Heart left ventricle (tissue), 16 donors: ENCODE measurements at regions of chr5 and their contacts with region 1.

Region 1: GRCh38 chr5:178859625-178860531 is at the start of gene ZNF354B:
- DNase-seq: peak; percentile 89 to 94 (median 93)
- ATAC-seq: peak; percentile 95 to 99 (median 98)
- H3K4me3 ChIP-seq: peak within 1 kb of the TSS; percentile 68 to 96 (median 86)
- H3K27ac ChIP-seq: peak within 1 kb of the TSS; percentile 45 to 93 (median 85)
- H3K4me1 ChIP-seq: peaks cover 0 to 25% (median 12%) of the 10 kb centered on the region in 12 donors
- H3K27me3 ChIP-seq: no peaks in the 10 kb centered on the region
- CTCF ChIP-seq: peak in 6 of 12 donors; percentile 13 to 38 (median 34)
- POLR2A ChIP-seq: peak; percentile 42 to 72
- total RNA-seq, gene ZNF354B: 5.2 to 11.9 (median 7.6) TPM

Region 2: DNA sequence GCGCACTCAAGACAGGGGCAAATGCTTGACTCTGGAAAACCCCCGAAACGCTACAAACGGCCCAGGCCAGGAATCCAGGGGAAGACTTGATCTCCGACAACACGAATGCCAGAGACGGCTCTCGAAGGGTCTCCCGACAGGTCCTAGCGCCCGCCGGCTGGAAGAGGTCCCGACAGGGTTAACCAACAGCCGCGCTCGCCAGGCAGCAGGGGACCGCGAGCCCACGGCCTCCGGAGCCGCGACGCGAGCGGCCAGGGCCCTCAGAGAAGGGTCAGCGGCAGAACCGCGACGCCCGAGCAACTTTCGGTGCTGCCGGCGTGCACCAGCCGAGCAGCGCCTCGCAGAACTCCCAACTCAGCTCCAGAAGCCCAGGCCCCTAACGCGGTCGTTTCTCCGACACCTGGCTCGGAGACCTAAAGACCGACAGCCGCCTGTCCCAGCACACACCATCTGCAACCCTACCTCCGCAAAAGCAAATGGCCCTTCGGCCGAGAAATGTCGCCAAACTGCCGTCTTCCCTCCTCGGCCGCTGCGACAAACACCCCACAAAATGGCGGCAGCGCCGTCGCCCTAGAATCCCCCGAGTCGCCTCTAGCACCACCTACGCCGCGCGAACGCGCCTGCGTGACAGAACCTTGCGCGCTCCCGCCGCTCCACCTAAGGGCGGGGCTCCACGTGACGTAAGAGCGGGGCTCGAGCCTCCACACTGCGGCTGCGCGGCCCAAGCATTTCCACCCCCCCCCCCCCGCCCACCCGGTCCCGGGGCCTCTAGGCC is 233.2 kb before region 1 on chr5 and contains the start of gene CLK4:
- intact Hi-C with region 1: loop called in 2 of 10 experiments (anchors 10 kb)
- DNase-seq: peak; percentile 96 to 99 (median 97)
- ATAC-seq: peak; percentile 95 to 98 (median 97)
- H3K4me3 ChIP-seq: peak within 1 kb of the TSS; percentile 58 to 98 (median 84)
- H3K27ac ChIP-seq: peak within 1 kb of the TSS; percentile 87 to 99 (median 98)
- H3K4me1 ChIP-seq: peaks cover 12 to 41% (median 33%) of the 10 kb centered on the region in 12 donors
- H3K27me3 ChIP-seq: no peaks in the 10 kb centered on the region
- CTCF ChIP-seq: no peak
- POLR2A ChIP-seq: peak in 1 of 2 donors; percentile 79
- total RNA-seq, gene CLK4: 9.9 to 24.0 (median 16.3) TPM

Region 3: DNA sequence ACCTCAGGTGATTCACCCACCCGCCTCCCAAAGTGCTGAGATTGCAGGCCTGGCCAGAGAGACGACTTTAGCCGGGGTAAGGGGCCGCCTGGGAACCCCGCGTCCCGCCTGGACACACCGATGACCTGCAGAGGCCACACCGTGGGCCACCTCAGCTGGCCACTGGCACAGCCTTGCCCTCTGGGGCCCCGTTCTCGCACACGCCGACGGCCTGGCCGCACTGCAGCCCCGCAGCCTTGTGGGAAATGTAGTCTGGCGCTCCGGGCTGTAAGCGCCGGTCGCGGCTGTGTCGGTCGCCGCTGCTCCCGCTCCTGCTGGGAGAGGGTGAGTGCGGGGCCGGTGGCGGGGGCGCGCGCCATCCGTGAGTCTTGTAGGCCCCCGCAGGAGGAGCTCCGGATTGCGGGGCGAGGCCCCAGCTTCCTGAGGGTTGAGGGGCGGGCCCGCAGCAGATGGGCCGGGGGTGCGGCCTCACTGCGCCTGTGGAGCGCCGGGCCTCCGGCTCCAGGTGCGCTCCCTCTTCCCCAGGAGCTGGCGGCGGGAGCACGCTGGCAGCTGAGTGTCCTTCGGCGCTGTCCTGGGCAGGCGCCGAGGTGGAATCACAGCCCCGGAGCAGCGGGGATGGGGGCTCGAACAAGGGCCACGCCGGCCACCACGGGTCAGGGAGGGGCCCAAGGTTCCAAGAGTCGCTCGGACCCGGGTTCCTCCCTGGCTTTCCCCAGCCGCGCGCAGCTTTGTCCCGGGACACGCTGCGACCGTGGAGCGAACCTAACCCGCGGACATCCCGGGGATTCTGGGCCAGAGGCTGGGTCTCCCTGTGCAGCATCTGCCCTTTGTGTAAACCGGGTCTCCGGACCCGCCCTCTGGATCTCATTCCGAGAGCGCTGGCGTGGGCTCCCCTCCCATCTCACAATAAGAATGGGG is 36.0 kb after region 1 on chr5 and contains the start of gene ZFP2:
- intact Hi-C with region 1: loop called in 1 of 10 experiments (anchors 5 kb)
- DNase-seq: peak; percentile 65 to 85 (median 73)
- ATAC-seq: peak; percentile 93 to 99 (median 98)
- H3K4me3 ChIP-seq: peak within 1 kb of the TSS; percentile 65 to 99 (median 83)
- H3K27ac ChIP-seq: peak within 1 kb of the TSS in 11 of 12 donors; percentile 34 to 83 (median 67)
- H3K4me1 ChIP-seq: peaks cover 0 to 11% (median 2%) of the 10 kb centered on the region in 12 donors
- H3K27me3 ChIP-seq: peaks cover 0 to 6% (median 0%) of the 10 kb centered on the region in 9 donors
- CTCF ChIP-seq: peak in 1 of 12 donors; percentile 20
- POLR2A ChIP-seq: peak in 1 of 2 donors; percentile 29
- total RNA-seq, gene ZFP2: 0.49 to 1.6 (median 1.2) TPM

Region 4: DNA sequence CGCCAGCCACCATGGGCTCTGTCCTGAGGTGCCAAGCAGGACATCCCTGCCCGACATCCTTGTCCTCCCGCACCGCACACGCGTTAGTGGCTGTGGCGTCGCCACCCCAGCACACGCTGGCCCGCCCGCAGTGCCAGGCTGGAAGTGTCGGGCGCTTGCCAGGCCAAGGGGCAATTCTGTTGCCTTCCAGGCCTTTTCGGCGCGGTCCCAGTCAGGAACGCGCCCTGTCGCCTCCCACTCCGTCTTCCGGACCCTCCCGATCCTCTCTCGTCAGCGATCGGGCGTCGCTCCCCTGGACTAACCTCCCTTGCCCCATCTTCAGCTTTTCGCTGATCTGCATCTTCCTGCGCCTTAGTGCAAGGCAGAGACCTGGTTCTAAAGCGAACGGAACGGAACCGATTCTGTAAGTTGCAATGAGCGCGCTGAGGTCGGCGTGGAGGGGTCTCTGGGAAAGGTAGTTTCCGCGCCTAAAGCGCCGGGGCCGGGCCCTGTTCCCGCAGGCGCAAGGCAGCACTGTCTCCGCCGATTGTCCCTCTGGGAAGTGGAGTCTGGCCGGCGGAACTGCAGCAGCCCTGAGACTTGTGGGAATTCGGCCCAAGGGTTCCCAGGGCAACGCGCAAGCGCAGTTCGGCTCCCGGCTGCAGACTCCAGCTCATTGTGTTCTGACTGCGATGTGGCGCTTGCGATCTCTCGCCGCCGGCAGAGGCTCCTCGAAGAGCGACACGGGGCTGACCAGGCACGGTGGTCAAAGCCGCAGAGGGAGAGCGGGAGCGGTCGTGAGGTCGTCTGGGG is 80.9 kb after region 1 on chr5 and contains the start of gene ZNF454:
- intact Hi-C with region 1: loop called in 3 of 10 experiments (anchors 2 to 10 kb)
- DNase-seq: peak; percentile 95 to 97 (median 96)
- ATAC-seq: peak; percentile 99 to 100 (median 100)
- H3K4me3 ChIP-seq: peak within 1 kb of the TSS; percentile 54 to 97 (median 71)
- H3K27ac ChIP-seq: peak within 1 kb of the TSS; percentile 2 to 88 (median 71)
- H3K4me1 ChIP-seq: peaks cover 0 to 16% (median 6%) of the 10 kb centered on the region in 12 donors
- H3K27me3 ChIP-seq: no peaks in the 10 kb centered on the region
- CTCF ChIP-seq: peak in 1 of 12 donors; percentile 10
- POLR2A ChIP-seq: peak in 1 of 2 donors; percentile 54
- total RNA-seq, gene ZNF454: 1.3 to 3.4 (median 1.8) TPM

Region 5: GRCh38 chr5:179060116-179061008 is 200.5 kb after region 1 on chr5 and contains the start of gene ZNF354C:
- intact Hi-C with region 1: loop called in 6 of 10 experiments (anchors 1 to 10 kb)
- DNase-seq: peak; percentile 92 to 96 (median 94)
- ATAC-seq: peak; percentile 99
- H3K4me3 ChIP-seq: peak within 1 kb of the TSS; percentile 51 to 95 (median 78)
- H3K27ac ChIP-seq: peak within 1 kb of the TSS in 11 of 12 donors; percentile 45 to 86 (median 82)
- H3K4me1 ChIP-seq: peaks cover 0 to 19% (median 9%) of the 10 kb centered on the region in 12 donors
- H3K27me3 ChIP-seq: no peaks in the 10 kb centered on the region
- CTCF ChIP-seq: peak in 1 of 12 donors; percentile 18
- POLR2A ChIP-seq: peak in 1 of 2 donors; percentile 87
- total RNA-seq, gene ZNF354C: 3.5 to 5.7 (median 4.1) TPM